SK-N-SH (cell line): ENCODE measurements at regions of chr1 and their contacts with region 1.

Region 1: GRCh38 chr1:21200767-21201166 is 24.1 kb upstream of the EIF4G3 start:
- DNase-seq: no peak
- H3K4me3 ChIP-seq: no peak overlapping the region
- H3K27ac ChIP-seq: peak overlapping the region in 1 of 2 experiments; percentile 73; a peak in 2 of 4 replicates
- H3K4me1 ChIP-seq: peaks cover 0 to 4% of the 10 kb centered on the region in 2 experiments; a peak in 2 of 4 replicates
- H3K27me3 ChIP-seq: no peaks in the 10 kb centered on the region
- CTCF ChIP-seq: no peak
- EP300 ChIP-seq: no peak
- RAD21 ChIP-seq: no peak

Region 2: DNA sequence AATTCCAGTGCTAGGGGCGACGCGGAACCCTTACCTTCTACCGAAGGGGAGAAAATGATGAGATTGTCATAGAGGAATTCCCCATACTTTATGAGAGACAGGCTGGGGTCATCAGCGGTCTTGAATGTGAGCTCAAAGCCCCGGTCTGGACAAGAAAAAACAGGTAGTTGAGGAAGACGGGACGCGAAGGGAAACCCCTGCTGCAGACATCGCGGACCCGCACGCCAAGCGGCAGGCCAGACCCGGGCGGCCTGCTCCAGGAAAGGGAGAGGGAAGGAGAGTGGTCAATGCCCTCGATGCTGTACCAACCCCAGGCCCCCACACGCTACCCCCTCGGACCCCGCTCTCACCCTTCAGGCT is 539.9 kb before region 1 on chr1:
- CTCF ChIA-PET with region 1: no interaction called
- POLR2A ChIA-PET with region 1: no interaction called
- DNase-seq: no peak
- H3K4me3 ChIP-seq: peak overlapping the region; percentile 89 to 99
- H3K27ac ChIP-seq: peak overlapping the region; percentile 38 to 79; a peak in 3 of 4 replicates
- H3K4me1 ChIP-seq: peaks cover 9 to 14% of the 10 kb centered on the region in 2 experiments
- H3K27me3 ChIP-seq: no peaks in the 10 kb centered on the region
- CTCF ChIP-seq: no peak
- EP300 ChIP-seq: no peak
- RAD21 ChIP-seq: no peak

Region 3: GRCh38 chr1:20786253-20787028 is 414.3 kb before region 1 on chr1:
- CTCF ChIA-PET with region 1: interaction called, 13 read pairs
- POLR2A ChIA-PET with region 1: no interaction called
- DNase-seq: peak; percentile 98
- H3K4me3 ChIP-seq: peak overlapping the region; percentile 72 to 95
- H3K27ac ChIP-seq: peak overlapping the region; percentile 87 to 96
- H3K4me1 ChIP-seq: peaks cover 3 to 6% of the 10 kb centered on the region in 2 experiments; a peak in 2 of 4 replicates
- H3K27me3 ChIP-seq: no peaks in the 10 kb centered on the region
- CTCF ChIP-seq: no peak
- EP300 ChIP-seq: no peak
- RAD21 ChIP-seq: no peak

Region 4: GRCh38 chr1:20981915-20982314 is 218.9 kb before region 1 on chr1:
- CTCF ChIA-PET with region 1: interaction called, 44 read pairs
- POLR2A ChIA-PET with region 1: no interaction called
- DNase-seq: peak; percentile 29
- H3K4me3 ChIP-seq: no peak overlapping the region
- H3K27ac ChIP-seq: peak overlapping the region; percentile 50 to 76
- H3K4me1 ChIP-seq: peaks cover 10 to 47% of the 10 kb centered on the region in 2 experiments
- H3K27me3 ChIP-seq: no peaks in the 10 kb centered on the region
- CTCF ChIP-seq: peak; percentile 42
- EP300 ChIP-seq: no peak
- RAD21 ChIP-seq: peak; percentile 73

Region 5: GRCh38 chr1:21184276-21184675 is 16.5 kb before region 1 on chr1:
- CTCF ChIA-PET with region 1: interaction called, 49 read pairs
- POLR2A ChIA-PET with region 1: no interaction called
- DNase-seq: no peak
- H3K4me3 ChIP-seq: no peak overlapping the region
- H3K27ac ChIP-seq: no peak overlapping the region
- H3K4me1 ChIP-seq: no peaks in the 10 kb centered on the region; a peak in 1 of 4 replicates
- H3K27me3 ChIP-seq: no peaks in the 10 kb centered on the region
- CTCF ChIP-seq: no peak
- EP300 ChIP-seq: no peak
- RAD21 ChIP-seq: no peak

Region 6: DNA sequence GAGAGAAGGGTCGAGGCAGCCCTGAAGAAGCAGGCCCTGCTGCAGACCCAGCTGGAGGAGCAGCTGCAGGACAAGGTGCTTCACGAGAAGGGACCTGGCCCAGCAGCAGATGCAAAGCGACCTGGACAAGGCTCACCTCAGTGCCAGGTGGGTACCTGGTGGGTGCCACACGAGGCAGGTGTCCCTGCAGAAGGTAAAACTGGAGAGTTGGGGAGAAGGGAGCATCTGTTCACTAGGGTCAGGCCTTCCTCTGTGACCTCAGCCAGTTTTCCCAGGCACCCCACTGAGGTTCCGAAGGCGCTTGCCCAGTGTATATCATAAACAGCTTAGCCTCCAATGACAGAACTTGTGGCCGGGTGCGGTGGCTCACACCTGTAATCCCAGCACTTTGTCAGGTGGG is 233.6 kb after region 1 on chr1:
- CTCF ChIA-PET with region 1: no interaction called
- POLR2A ChIA-PET with region 1: no interaction called
- DNase-seq: no peak
- H3K4me3 ChIP-seq: no peak overlapping the region
- H3K27ac ChIP-seq: no peak overlapping the region
- H3K4me1 ChIP-seq: peaks cover 0 to 2% of the 10 kb centered on the region in 2 experiments; a peak in 1 of 4 replicates
- H3K27me3 ChIP-seq: no peaks in the 10 kb centered on the region
- CTCF ChIP-seq: no peak
- EP300 ChIP-seq: no peak
- RAD21 ChIP-seq: no peak